ENCODE measurements at regions of chr15 and their contacts with region 1.

Region 1: GRCh38 chr15:94670438-94671034 is 439.2 kb downstream of the MCTP2 start:
- DNase-seq: peak; percentile 84
- H3K4me3 ChIP-seq: no peak overlapping the region
- H3K27ac ChIP-seq: peak overlapping the region; percentile 72
- H3K4me1 ChIP-seq: peaks cover 33% of the 10 kb centered on the region
- H3K27me3 ChIP-seq: no peaks in the 10 kb centered on the region
- CTCF ChIP-seq: peak; percentile 38 to 45
- POLR2A ChIP-seq: no peak

Region 2: DNA sequence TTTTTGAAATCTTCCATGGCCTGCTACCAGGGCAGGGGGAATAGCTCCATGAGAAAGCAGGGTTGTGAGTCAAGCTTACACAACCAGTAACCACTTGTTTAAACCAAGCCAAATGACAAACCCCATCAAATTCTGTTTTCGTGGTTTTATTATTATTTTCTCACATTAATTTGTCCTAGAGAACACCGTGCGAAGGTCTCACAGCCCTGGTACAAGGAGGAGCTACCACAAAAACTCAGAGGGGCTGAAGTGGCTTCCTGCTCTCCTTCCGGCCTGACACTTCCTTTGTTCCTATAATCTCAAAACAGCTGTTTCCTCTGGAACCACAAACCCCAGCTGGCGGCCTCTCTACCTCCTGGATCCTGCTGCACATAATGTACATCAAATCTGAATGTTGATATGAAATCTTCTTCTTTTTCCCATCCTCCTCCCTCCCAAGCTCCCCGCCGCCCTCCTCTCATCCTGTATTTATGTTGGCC is 63.3 kb before region 1 on chr15:
- CTCF ChIA-PET with region 1: interaction called, 44 read pairs
- POLR2A ChIA-PET with region 1: interaction called, 3 read pairs
- dilution Hi-C with region 1: no loop called
- intact Hi-C with region 1: loop called (anchors 1 kb)
- DNase-seq: peak; percentile 96
- H3K4me3 ChIP-seq: no peak overlapping the region
- H3K27ac ChIP-seq: peak overlapping the region; percentile 97
- H3K4me1 ChIP-seq: peaks cover 40% of the 10 kb centered on the region
- H3K27me3 ChIP-seq: no peaks in the 10 kb centered on the region
- CTCF ChIP-seq: no peak
- POLR2A ChIP-seq: peak; percentile 75

Region 3: DNA sequence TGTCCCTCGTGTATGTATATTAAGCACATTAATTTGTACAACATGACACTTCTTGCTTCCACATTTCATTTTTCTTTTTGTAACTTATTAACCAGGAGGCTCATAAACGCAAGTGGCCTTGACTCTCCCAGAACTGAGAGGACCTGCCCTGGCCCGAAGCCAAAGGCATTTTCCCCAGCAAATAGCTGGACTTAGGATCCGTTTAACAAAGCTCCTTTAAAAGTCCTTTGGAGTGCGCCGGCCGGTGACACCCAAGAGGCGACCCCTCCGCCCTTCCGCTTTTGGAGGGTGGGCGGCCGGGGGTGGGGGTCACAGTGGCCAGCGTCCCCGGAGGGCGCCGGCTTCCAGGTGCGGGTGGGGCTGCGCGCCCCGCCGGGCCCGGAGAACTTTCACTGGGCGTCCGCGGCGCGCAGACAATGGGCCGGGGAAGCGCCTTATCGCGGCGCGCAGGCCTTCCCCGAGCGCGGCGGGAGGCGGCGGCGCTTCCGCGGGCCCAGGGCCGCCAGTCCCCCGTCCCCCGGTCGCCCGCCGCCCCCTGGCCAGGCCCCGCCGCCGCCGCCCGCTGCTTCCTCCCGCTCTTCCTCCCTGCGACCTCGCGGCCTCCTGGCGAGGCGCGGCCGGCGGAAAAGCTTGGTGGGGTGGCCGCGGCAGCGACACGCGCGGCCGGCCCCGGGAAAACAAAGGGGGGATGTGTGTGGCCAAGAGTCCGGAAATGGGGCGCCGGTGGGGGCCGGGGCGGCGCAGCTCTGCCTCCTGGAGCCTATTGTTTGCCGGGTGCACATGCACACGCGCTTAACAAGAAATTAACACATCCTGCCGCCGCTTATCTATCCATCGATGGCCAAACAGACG is 174.2 kb after region 1 on chr15:
- CTCF ChIA-PET with region 1: interaction called, 92 read pairs
- POLR2A ChIA-PET with region 1: interaction called, 12 read pairs
- dilution Hi-C with region 1: no loop called
- intact Hi-C with region 1: loop called (anchors 1 kb)
- DNase-seq: peak; percentile 98
- H3K4me3 ChIP-seq: peak overlapping the region in 1 of 3 experiments; percentile 31
- H3K27ac ChIP-seq: peak overlapping the region; percentile 100
- H3K4me1 ChIP-seq: peaks cover 60% of the 10 kb centered on the region
- H3K27me3 ChIP-seq: no peaks in the 10 kb centered on the region
- CTCF ChIP-seq: peak in 1 of 2 donors; percentile 36
- POLR2A ChIP-seq: peak; percentile 62

Region 4: GRCh38 chr15:95175914-95176658 is 505.6 kb after region 1 on chr15:
- CTCF ChIA-PET with region 1: interaction called, 14 read pairs
- POLR2A ChIA-PET with region 1: no interaction called
- dilution Hi-C with region 1: no loop called
- intact Hi-C with region 1: loop called (anchors 1 kb)
- DNase-seq: peak; percentile 94
- H3K4me3 ChIP-seq: no peak overlapping the region
- H3K27ac ChIP-seq: peak overlapping the region; percentile 95
- H3K4me1 ChIP-seq: peaks cover 30% of the 10 kb centered on the region
- H3K27me3 ChIP-seq: no peaks in the 10 kb centered on the region
- CTCF ChIP-seq: no peak
- POLR2A ChIP-seq: no peak

Region 5: DNA sequence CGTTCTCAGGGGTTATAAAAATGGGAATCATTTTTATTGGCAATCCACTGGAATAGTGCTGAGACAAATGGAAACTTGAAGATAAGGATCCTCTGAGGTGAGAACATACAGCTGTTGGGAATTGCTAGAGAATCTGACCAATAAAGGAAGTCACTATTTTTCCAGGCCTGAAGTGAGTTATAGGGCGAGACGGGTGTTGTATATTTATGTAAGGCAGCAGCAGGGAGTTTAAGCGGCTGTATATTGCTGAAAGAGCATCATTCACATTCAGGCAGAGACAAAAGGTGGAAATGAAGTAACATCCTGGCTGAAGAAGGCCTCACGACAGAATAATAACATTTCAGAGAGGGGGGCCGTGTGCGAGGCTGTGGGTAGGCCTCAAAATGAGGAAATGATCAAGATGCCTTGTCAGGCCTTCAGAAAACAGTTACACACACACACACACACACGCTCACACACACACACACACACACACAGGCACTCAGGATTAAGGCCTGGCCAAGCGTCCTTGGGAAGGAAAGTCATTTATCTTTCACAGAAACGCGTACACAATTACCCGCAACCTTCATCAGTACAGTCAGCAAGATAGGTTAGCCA is 695.1 kb after region 1 on chr15:
- CTCF ChIA-PET with region 1: interaction called, 3 read pairs
- POLR2A ChIA-PET with region 1: no interaction called
- dilution Hi-C with region 1: no loop called
- intact Hi-C with region 1: loop called (anchors 1 kb)
- DNase-seq: peak; percentile 100
- H3K4me3 ChIP-seq: no peak overlapping the region
- H3K27ac ChIP-seq: peak overlapping the region; percentile 98
- H3K4me1 ChIP-seq: peaks cover 37% of the 10 kb centered on the region
- H3K27me3 ChIP-seq: no peaks in the 10 kb centered on the region
- CTCF ChIP-seq: no peak
- POLR2A ChIP-seq: peak; percentile 87

Region 6: DNA sequence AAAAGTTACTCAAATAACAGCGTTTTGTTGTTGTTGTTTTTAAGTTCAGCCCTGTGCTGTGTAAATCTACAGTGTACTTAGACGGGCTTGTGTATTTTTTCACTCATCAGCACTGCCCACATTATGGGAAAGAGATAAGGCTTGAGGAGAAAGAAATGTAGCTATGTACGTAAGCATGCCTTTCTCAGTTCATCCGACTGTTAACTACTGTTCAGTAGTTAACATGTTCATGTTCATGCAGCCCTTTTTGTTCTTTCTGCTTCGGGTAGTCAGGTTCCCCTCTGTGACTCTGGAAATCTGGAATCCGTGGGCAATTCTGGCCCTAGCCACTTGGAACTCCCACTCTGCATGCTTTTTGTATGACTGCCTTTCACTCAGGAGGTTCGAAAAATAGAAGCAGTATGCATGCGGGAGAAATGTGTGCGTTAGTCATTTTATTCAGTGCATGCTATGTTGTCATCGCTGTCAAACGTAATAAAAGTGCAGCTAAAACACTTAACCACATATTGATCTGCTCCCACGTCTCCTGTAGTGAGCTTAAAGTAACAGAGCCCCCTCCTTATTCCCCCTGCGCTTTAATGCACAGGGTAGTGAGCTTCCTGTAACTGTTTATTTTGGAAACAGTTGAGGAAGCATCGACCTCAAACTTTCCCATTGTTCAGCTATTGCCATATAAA is 1376.9 kb after region 1 on chr15:
- CTCF ChIA-PET with region 1: no interaction called
- POLR2A ChIA-PET with region 1: no interaction called
- dilution Hi-C with region 1: no loop called
- intact Hi-C with region 1: loop called (anchors 10 kb)
- DNase-seq: peak; percentile 83
- H3K4me3 ChIP-seq: peak overlapping the region in 1 of 3 experiments; percentile 13
- H3K27ac ChIP-seq: no peak overlapping the region
- H3K4me1 ChIP-seq: peaks cover 14% of the 10 kb centered on the region
- H3K27me3 ChIP-seq: peaks cover 0 to 1% of the 10 kb centered on the region in 2 experiments
- CTCF ChIP-seq: no peak
- POLR2A ChIP-seq: no peak